ENCODE measurements at regions of chr17 and their contacts with region 1.

Region 1: DNA sequence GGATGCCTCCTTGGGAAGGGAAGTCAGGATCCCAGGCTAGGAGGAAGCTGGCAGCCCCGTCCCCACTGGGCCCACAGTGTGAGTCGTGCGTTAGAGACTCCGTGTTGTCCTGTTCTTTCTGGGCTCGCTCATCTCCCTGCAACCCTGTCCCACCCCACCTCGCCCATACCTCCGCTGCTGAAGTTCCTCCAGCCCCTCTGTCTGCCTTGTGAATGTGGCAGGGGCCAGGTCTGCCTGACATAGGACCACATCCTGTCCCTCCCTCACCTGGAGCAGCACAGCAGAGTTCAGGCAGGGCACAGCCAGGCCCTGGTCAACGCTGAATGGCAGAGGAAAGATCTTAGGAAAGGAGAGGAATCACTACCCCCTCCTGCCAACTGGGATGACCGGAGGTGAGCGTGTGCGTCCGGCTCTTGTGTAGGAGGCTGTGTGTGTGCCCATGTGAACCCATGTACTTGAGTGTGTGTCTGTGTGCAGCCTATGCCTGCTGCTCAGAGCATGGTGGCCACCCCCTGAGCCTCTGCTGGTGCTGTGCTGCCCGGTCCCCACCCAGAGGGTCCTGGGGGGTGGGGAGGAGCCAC is 12.8 kb downstream of the KCNJ18 start:
- DNase-seq: peak in 3 of 10 donors; percentile 62 to 81 (median 69)

Region 2: GRCh38 chr17:21419299-21420239 is 285.5 kb before region 1 on chr17:
- intact Hi-C with region 1: loop called (anchors 5 kb)
- DNase-seq: peak in 3 of 10 donors; percentile 64 to 85 (median 73)

Region 3: GRCh38 chr17:21564262-21564661 is 140.8 kb before region 1 on chr17:
- intact Hi-C with region 1: no loop called
- DNase-seq: no peak

Measured in posterior cingulate gyrus (tissue), 11 donors.